IMR-90 (cell line): ENCODE measurements at regions of chr3 and their contacts with region 1.

Region 1: DNA sequence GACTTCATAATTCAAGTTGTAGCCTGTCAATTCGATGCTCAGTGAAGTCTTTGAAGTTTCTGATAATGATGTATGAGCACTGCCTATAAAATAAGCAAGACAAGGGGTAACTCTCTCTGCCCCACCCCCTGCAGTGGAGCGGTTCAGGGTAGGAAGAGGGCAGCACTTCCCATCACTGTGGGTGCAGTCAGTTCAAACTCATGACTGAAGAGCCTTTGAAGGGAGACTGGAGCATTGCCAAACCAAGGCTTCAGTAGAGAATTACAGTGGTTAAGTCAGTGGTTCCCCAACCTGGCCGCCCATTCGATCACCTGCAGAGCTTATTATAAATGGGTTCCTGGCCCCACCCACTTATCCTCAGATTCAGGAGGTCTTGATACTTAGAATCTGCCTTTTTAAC is 190.6 kb downstream of the SHQ1 start:
- DNase-seq: no peak
- ATAC-seq: no peak
- H3K4me3 ChIP-seq: no peak overlapping the region
- H3K27ac ChIP-seq: no peak overlapping the region
- H3K4me1 ChIP-seq: no peaks in the 10 kb centered on the region
- H3K27me3 ChIP-seq: peaks cover 23% of the 10 kb centered on the region
- CTCF ChIP-seq: no peak
- POLR2A ChIP-seq: no peak
- RAD21 ChIP-seq: no peak

Region 2: DNA sequence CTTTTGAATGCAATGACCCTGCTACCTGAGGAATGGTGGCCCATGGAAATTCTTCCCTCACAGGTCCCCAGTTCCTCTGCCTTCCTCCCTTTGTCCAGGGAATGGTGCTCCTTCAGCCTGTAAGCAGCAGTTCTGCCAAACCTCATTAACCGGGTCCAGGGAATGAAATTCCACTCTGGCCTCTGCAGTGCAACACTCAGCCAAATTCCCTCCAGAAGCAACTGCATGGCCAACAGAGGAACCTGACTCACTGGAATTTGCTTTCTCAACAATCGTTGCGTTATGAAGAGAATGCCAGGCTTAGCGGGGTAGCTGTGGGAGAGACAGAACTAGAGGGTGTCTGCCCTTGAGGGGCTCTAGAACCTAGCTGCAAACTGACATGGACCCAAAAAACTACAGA is 423.3 kb before region 1 on chr3:
- CTCF ChIA-PET with region 1: no interaction called
- POLR2A ChIA-PET with region 1: no interaction called
- dilution Hi-C with region 1: no loop called
- in situ Hi-C with region 1: no loop called
- intact Hi-C with region 1: no loop called
- DNase-seq: peak; percentile 50
- ATAC-seq: peak; percentile 82
- H3K4me3 ChIP-seq: no peak overlapping the region
- H3K27ac ChIP-seq: no peak overlapping the region
- H3K4me1 ChIP-seq: no peaks in the 10 kb centered on the region; the same call in 1 of the 2 replicates
- H3K27me3 ChIP-seq: peaks cover 37% of the 10 kb centered on the region
- CTCF ChIP-seq: no peak
- POLR2A ChIP-seq: no peak
- RAD21 ChIP-seq: no peak

Region 3: GRCh38 chr3:73080216-73080966 is 422.7 kb after region 1 on chr3:
- CTCF ChIA-PET with region 1: no interaction called
- POLR2A ChIA-PET with region 1: no interaction called
- dilution Hi-C with region 1: no loop called
- in situ Hi-C with region 1: no loop called
- intact Hi-C with region 1: loop called (anchors 5 kb)
- DNase-seq: no peak
- ATAC-seq: no peak
- H3K4me3 ChIP-seq: no peak overlapping the region
- H3K27ac ChIP-seq: no peak overlapping the region
- H3K4me1 ChIP-seq: no peaks in the 10 kb centered on the region
- H3K27me3 ChIP-seq: no peaks in the 10 kb centered on the region
- CTCF ChIP-seq: no peak
- POLR2A ChIP-seq: no peak
- RAD21 ChIP-seq: no peak